ENCODE measurements at regions of chr16 and their contacts with region 1.

Region 1: GRCh38 chr16:53792161-53792951 is 88.4 kb downstream of the FTO start:
- DNase-seq: no peak
- ATAC-seq: peak in 1 of 4 donors; percentile 48
- H3K4me3 ChIP-seq: no peak overlapping the region
- H3K27ac ChIP-seq: no peak overlapping the region
- H3K4me1 ChIP-seq: peaks cover 4% of the 10 kb centered on the region
- H3K27me3 ChIP-seq: no peaks in the 10 kb centered on the region
- CTCF ChIP-seq: no peak

Region 2: GRCh38 chr16:53743149-53743566 is 49.2 kb before region 1 on chr16:
- intact Hi-C with region 1: no loop called
- DNase-seq: no peak
- ATAC-seq: no peak
- H3K4me3 ChIP-seq: no peak overlapping the region
- H3K27ac ChIP-seq: no peak overlapping the region
- H3K4me1 ChIP-seq: peaks cover 19% of the 10 kb centered on the region
- H3K27me3 ChIP-seq: no peaks in the 10 kb centered on the region
- CTCF ChIP-seq: peak; percentile 37

Region 3: GRCh38 chr16:53855511-53855910 is 63.2 kb after region 1 on chr16:
- intact Hi-C with region 1: loop called in 1 of 2 experiments (anchors 5 kb)
- DNase-seq: no peak
- ATAC-seq: no peak
- H3K4me3 ChIP-seq: no peak overlapping the region
- H3K27ac ChIP-seq: no peak overlapping the region
- H3K4me1 ChIP-seq: no peaks in the 10 kb centered on the region
- H3K27me3 ChIP-seq: no peaks in the 10 kb centered on the region
- CTCF ChIP-seq: no peak

Measured in psoas muscle (tissue), 8 donors.